Activated T-helper 2 cell treated with anti-CD3 and anti-CD28 coated beads, Interferon-gamma antibody, Interleukin-2, Interleukin-4, amounts not matched to agents 10 μg/mL and 5 μg/mL and 100 μg/mL, durations not matched to agents 14 hours and 24 hours and 36 hours (primary cell): ENCODE measurements at regions of chr11 and their contacts with region 1.

Region 1: DNA sequence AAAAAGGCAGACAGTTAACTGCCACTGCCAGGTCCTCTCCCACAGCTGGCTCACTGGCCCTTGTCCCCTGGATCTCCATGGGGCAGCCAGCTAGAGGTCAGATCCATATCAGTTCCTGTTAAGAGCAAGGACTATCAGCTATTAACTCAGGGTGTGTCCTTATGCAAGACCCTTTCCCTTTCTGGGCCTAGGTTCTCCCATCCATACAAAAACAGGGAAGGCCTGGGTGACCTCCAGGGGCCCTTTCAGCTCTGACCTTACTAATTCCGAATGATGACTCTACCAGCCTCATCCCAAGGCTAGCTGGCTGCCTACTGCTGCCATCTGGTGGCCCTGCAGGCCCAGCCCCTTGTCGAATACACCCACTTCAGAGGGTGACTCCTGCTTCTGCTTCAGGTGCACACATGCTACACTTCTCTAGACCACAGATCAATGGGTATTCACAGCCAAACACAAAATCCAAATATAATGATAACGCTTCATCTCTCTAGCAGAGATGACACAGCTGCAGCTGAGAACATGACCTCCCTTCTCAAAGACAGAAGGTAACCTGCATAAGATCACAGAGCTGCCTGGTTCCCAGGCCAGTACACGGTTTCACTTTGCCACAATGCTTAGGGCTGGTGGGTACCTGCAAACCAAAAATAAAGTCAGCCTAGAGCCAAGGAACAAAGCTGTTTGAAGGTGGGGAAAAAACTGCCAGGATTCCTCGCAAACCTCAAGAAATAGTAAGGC is 34.1 kb downstream of the SERGEF start:
- DNase-seq: no peak
- H3K4me3 Mint-ChIP-seq: no peak overlapping the region
- H3K27ac Mint-ChIP-seq: no peak overlapping the region
- H3K4me1 Mint-ChIP-seq: no peaks in the 10 kb centered on the region
- H3K27me3 Mint-ChIP-seq: no peaks in the 10 kb centered on the region

Region 2: GRCh38 chr11:17598700-17599459 is 379.8 kb before region 1 on chr11:
- intact Hi-C with region 1: loop called (anchors 2 kb)
- DNase-seq: peak; percentile 53
- H3K4me3 Mint-ChIP-seq: no peak overlapping the region
- H3K27ac Mint-ChIP-seq: no peak overlapping the region
- H3K4me1 Mint-ChIP-seq: peaks cover 10% of the 10 kb centered on the region
- H3K27me3 Mint-ChIP-seq: no peaks in the 10 kb centered on the region

Region 3: DNA sequence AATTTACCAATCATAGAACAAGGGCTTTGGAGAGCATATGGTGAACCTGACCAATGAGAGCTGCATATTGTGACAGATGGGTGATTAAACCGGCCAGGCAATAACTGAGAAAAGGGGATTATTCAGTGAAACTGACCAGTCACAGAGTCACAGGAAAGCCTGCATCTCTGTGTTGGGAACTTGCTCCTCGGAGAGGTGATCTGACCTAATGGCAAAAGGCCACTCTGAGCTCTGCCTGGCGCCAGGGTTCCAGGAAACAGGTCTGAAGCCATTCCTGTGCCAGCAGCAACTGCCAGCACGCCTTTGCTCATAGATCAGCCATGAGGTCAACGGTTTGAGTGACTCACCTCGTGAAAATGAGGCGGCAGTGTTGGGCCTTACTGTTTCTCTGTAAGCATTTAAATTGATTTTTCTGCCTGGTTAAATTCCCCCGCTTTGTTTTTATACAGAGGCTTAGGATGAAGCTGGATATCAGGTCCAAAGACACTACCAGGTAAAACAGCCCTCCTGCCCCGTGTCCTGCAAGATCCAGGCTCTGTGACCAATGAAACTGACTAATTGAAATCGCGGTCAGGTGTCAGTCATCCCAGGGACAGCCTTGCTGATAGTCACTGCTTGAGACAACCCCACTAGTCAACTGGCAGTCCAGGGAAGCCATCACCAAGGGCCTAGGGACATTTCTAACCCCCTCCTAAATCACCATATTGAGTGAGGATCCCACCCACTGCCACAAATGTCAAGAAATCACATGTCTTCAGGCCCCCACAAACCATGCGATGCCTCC is 295.1 kb before region 1 on chr11:
- intact Hi-C with region 1: no loop called
- DNase-seq: no peak
- H3K4me3 Mint-ChIP-seq: no peak overlapping the region
- H3K27ac Mint-ChIP-seq: no peak overlapping the region
- H3K4me1 Mint-ChIP-seq: no peaks in the 10 kb centered on the region
- H3K27me3 Mint-ChIP-seq: peaks cover 7% of the 10 kb centered on the region

Region 4: GRCh38 chr11:17730608-17731462 is 247.9 kb before region 1 on chr11:
- intact Hi-C with region 1: loop called (anchors 1 kb)
- DNase-seq: peak; percentile 51
- H3K4me3 Mint-ChIP-seq: no peak overlapping the region
- H3K27ac Mint-ChIP-seq: no peak overlapping the region
- H3K4me1 Mint-ChIP-seq: no peaks in the 10 kb centered on the region
- H3K27me3 Mint-ChIP-seq: peaks cover 60% of the 10 kb centered on the region

Region 5: DNA sequence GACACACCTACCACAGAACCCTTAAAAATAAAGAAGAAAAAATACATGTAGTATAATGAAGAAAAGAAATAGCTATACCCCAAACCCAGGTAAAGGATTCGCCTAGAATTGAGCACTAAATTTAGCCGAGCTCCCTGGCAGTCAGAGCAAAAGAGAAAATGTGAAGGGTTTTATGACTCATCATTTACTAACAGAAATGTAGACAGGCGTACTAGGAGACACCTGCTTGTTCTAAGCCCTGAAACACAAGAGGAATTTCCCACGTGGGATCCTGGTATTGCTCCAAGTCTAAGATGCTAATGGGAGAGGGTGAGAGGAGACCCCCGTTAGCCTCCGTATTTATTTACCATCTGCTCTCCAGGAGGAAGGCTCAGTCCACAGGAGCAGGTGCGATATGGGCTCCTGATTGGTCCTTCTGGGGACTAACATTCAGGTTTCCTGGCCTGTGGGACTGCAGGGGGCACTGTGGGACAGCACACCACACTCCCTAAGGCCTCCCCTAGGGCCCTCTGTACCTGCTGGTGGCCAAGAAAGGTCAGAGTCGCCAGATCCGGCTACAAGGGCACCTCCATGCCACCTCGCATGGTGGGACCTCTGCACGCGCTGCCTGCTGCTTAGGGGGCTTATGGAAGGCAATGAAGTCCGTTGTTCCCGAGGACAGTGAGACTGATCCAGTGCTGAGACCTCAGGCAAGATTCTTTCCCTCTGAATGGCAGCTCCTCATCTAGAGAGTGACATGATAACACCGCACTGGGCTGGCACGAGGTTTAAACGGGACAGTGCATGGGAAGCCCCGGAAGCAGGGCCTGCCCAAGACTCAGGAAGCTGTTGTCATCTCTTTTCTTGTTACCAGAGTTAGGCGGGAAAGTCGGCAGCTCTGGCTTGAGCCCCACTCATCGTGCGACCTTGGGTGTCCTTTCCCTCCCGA is 218.4 kb before region 1 on chr11:
- intact Hi-C with region 1: loop called (anchors 2 kb)
- DNase-seq: no peak
- H3K4me3 Mint-ChIP-seq: no peak overlapping the region
- H3K27ac Mint-ChIP-seq: no peak overlapping the region
- H3K4me1 Mint-ChIP-seq: peaks cover 1% of the 10 kb centered on the region
- H3K27me3 Mint-ChIP-seq: no peaks in the 10 kb centered on the region

Region 6: GRCh38 chr11:17939542-17939941 is 39.2 kb before region 1 on chr11:
- intact Hi-C with region 1: no loop called
- DNase-seq: no peak
- H3K4me3 Mint-ChIP-seq: no peak overlapping the region
- H3K27ac Mint-ChIP-seq: no peak overlapping the region
- H3K4me1 Mint-ChIP-seq: no peaks in the 10 kb centered on the region
- H3K27me3 Mint-ChIP-seq: no peaks in the 10 kb centered on the region